ENCODE measurements at regions of chr17 and their contacts with region 1.

Region 1: DNA sequence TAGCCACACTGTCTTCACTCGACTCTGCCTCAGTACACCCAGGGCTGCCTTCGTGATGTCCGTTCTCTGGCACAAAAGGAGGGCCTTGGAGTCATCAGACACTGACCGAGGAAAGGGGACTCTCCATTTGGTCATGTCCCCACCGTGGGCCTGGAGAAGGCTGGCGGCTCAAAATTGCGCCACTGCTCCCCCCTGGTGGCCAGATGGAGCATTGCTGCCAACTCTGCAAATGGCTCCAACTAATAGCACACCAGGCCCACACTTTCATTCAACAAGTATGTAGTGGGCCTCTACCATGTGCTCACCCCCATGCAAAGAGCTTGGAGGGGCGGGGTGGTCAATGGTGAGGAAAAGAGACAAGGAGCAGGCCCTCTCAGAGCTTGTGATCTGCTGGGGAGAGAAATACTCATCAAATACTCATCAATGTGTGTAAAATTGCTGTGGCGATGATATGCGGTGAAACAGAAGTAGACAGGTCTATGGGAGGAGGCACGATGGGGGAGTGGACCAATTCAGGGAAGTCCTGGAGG is 5.2 kb upstream of the GRIN2C start:
- DNase-seq: peak; percentile 44 to 85 (median 68)
- ATAC-seq: peak; percentile 73
- H3K4me3 ChIP-seq: no peak overlapping the region
- H3K4me3 Mint-ChIP-seq: no peak overlapping the region
- H3K27ac ChIP-seq: no peak overlapping the region
- H3K27ac Mint-ChIP-seq: no peak overlapping the region
- H3K4me1 ChIP-seq: peaks cover 28% of the 10 kb centered on the region
- H3K4me1 Mint-ChIP-seq: peaks cover 19% of the 10 kb centered on the region
- H3K27me3 ChIP-seq: peaks cover 19 to 26% of the 10 kb centered on the region in 2 experiments
- H3K27me3 Mint-ChIP-seq: peaks cover 24% of the 10 kb centered on the region
- CTCF ChIP-seq: peak; percentile 89

Region 2: GRCh38 chr17:74659898-74660297 is 205.0 kb before region 1 on chr17:
- CTCF ChIA-PET with region 1: interaction called, 10 read pairs
- POLR2A ChIA-PET with region 1: interaction called, 5 read pairs
- intact Hi-C with region 1: loop called (anchors 1 kb)
- DNase-seq: no peak
- ATAC-seq: no peak
- H3K4me3 ChIP-seq: no peak overlapping the region
- H3K4me3 Mint-ChIP-seq: no peak overlapping the region
- H3K27ac ChIP-seq: no peak overlapping the region
- H3K27ac Mint-ChIP-seq: no peak overlapping the region
- H3K4me1 ChIP-seq: peaks cover 6% of the 10 kb centered on the region
- H3K4me1 Mint-ChIP-seq: peaks cover 5% of the 10 kb centered on the region
- H3K27me3 ChIP-seq: peaks cover 5 to 12% of the 10 kb centered on the region in 2 experiments
- H3K27me3 Mint-ChIP-seq: peaks cover 52% of the 10 kb centered on the region
- CTCF ChIP-seq: no peak

Region 3: GRCh38 chr17:74748529-74749365 is 116.2 kb before region 1 on chr17 and contains the start of gene NHERF1:
- CTCF ChIA-PET with region 1: no interaction called
- POLR2A ChIA-PET with region 1: interaction called, 3 read pairs
- intact Hi-C with region 1: loop called (anchors 1 to 5 kb)
- DNase-seq: peak in 13 of 14 experiments; percentile 83 to 97 (median 94)
- ATAC-seq: peak; percentile 82
- H3K4me3 ChIP-seq: peak within 1 kb of the TSS; percentile 98
- H3K4me3 Mint-ChIP-seq: peak within 1 kb of the TSS; percentile 92
- H3K27ac ChIP-seq: peak within 1 kb of the TSS; percentile 48 to 84
- H3K27ac Mint-ChIP-seq: peak within 1 kb of the TSS; percentile 94
- H3K4me1 ChIP-seq: peaks cover 74% of the 10 kb centered on the region
- H3K4me1 Mint-ChIP-seq: peaks cover 74% of the 10 kb centered on the region
- H3K27me3 ChIP-seq: no peaks in the 10 kb centered on the region
- H3K27me3 Mint-ChIP-seq: no peaks in the 10 kb centered on the region
- CTCF ChIP-seq: no peak
- total RNA-seq, gene NHERF1: 68.4 to 72.4 TPM

Region 4: GRCh38 chr17:74790161-74791054 is 74.5 kb before region 1 on chr17:
- CTCF ChIA-PET with region 1: interaction called, 16 read pairs
- POLR2A ChIA-PET with region 1: interaction called, 5 read pairs
- intact Hi-C with region 1: loop called (anchors 1 kb)
- DNase-seq: peak in 2 of 14 experiments; percentile 37 to 39
- ATAC-seq: no peak
- H3K4me3 ChIP-seq: no peak overlapping the region
- H3K4me3 Mint-ChIP-seq: no peak overlapping the region
- H3K27ac ChIP-seq: peak overlapping the region in 1 of 2 donors; percentile 30
- H3K27ac Mint-ChIP-seq: peak overlapping the region; percentile 74
- H3K4me1 ChIP-seq: peaks cover 41% of the 10 kb centered on the region
- H3K4me1 Mint-ChIP-seq: peaks cover 38% of the 10 kb centered on the region
- H3K27me3 ChIP-seq: no peaks in the 10 kb centered on the region
- H3K27me3 Mint-ChIP-seq: no peaks in the 10 kb centered on the region
- CTCF ChIP-seq: no peak

Region 5: DNA sequence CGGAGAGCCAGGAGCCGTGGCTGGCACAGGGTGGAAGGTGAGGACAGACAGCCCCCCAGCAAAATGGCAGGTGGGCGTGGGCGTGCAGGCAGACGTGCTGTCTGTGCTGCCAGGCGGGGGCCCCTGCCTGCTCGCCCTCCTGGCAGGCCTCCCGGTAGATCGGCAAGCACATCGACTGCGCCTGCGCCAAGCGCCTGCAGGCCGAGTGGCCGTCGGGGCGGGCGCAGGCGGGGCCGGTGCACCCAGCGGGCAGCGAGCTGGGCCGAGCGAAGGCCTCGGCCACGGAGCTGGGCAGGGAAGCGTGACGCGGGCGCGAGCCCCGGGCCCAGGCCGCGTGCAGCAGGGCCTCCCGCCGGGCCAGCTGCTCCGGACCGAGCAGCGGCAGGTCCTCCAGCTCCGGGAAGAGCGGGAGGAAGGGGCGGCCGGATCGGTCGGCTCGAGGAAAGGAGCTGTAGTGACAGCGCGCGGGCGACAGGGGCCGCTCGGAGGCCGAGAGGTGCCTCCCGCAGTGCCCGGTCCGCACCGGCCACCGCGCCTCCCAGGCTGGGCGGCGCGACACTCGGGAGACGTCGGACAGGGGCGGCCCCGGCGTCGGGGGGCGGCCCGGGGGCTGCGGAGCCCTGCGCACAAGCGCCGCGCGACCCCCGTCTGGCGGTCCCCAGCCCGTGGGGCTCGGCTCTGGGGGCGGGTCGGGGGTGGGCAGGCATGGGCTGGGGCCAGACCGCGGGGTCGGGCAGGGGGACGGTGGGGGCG is 22.2 kb before region 1 on chr17:
- CTCF ChIA-PET with region 1: interaction called, 18 read pairs
- POLR2A ChIA-PET with region 1: no interaction called
- intact Hi-C with region 1: no loop called
- DNase-seq: peak in 3 of 14 experiments; percentile 31 to 51 (median 51)
- ATAC-seq: peak; percentile 41
- H3K4me3 ChIP-seq: no peak overlapping the region
- H3K4me3 Mint-ChIP-seq: no peak overlapping the region
- H3K27ac ChIP-seq: no peak overlapping the region
- H3K27ac Mint-ChIP-seq: no peak overlapping the region
- H3K4me1 ChIP-seq: peaks cover 22% of the 10 kb centered on the region
- H3K4me1 Mint-ChIP-seq: peaks cover 10% of the 10 kb centered on the region
- H3K27me3 ChIP-seq: peaks cover 3 to 4% of the 10 kb centered on the region in 2 experiments
- H3K27me3 Mint-ChIP-seq: peaks cover 22% of the 10 kb centered on the region
- CTCF ChIP-seq: no peak

Region 6: DNA sequence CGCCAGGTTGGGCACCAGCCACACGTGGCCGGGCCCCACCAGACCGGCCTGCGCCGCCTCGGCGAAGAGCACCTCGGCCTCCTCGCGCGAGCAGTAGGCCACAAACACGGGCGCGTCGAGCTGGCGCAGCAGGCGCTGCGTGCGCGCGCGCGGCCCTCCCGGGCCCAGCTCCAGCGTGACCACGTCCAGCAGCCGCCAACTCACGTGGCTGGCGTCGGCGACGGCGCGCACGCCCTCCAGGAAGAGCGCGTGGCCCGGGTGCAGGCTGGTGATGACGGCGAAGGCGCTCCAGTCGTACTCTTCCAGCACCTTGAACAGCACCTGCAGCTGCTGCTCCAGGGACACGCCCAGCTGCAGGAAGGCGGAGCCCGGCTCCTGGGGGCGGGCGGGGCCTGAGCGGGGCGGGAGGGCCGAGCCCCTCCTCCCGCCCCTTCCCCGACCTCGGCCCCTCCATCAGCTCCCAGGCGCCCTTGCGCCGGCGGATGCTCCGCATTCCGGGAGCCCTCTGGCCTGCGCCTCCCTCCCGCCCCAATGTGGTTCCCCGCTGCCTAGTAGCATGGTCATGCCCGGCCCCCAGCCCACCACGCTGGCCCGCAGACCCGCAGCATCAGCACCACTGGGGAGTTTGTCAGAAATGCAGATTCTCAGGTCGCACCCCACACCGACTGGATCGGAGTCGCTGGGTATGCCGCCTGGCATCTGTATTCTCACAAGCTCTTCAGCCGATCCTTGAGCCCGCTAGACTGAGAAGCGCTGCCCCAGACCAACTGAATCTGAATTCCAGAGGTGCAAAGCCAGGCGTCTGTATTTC is 12.5 kb before region 1 on chr17:
- CTCF ChIA-PET with region 1: interaction called, 13 read pairs
- POLR2A ChIA-PET with region 1: interaction called, 9 read pairs
- intact Hi-C with region 1: no loop called
- DNase-seq: peak; percentile 48 to 87 (median 64)
- ATAC-seq: peak; percentile 95
- H3K4me3 ChIP-seq: peak overlapping the region; percentile 55
- H3K4me3 Mint-ChIP-seq: peak overlapping the region; percentile 82
- H3K27ac ChIP-seq: no peak overlapping the region
- H3K27ac Mint-ChIP-seq: no peak overlapping the region
- H3K4me1 ChIP-seq: peaks cover 8% of the 10 kb centered on the region
- H3K4me1 Mint-ChIP-seq: peaks cover 5% of the 10 kb centered on the region
- H3K27me3 ChIP-seq: peaks cover 30 to 54% of the 10 kb centered on the region in 2 experiments
- H3K27me3 Mint-ChIP-seq: peaks cover 50% of the 10 kb centered on the region
- CTCF ChIP-seq: no peak

Region 7: DNA sequence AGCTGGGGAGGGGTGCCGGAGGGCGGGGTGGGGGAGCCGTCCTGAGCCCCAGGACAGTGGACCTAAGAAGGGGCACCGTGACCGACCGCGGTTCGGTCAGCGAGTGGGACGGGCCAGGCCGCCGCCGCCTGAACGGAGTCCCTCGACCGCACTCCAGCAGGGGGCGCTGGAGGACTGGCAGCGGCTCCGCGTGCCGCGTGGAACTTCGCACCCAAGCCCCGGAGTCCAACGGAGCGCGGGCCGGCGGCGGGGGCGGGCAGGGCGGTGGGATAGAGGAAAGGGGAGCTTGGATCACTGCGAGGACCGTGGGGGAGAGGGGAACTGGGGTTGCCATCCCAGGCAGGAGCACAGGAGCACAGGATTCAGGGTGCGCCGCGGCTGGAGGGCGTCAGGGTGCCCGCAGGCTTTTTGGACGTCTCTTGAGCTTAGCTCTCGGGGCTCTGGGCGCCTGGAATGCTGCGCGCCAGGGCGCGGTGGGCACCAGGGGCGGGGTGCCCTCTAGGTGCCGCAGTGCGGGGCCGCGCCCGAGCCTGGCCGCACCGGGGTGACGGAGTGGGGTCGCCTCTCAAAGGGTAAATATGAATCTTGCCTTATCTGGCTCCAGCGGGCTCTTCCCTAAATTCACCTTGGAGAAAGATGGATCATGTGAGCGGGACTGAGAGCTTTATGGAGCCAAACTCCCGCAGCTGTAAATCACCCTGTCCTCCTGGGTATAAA is 58.8 kb after region 1 on chr17:
- CTCF ChIA-PET with region 1: no interaction called
- POLR2A ChIA-PET with region 1: no interaction called
- intact Hi-C with region 1: no loop called
- DNase-seq: peak; percentile 55 to 84 (median 66)
- ATAC-seq: peak; percentile 79
- H3K4me3 ChIP-seq: peak overlapping the region; percentile 37
- H3K4me3 Mint-ChIP-seq: peak overlapping the region; percentile 25
- H3K27ac ChIP-seq: no peak overlapping the region
- H3K27ac Mint-ChIP-seq: no peak overlapping the region
- H3K4me1 ChIP-seq: peaks cover 25% of the 10 kb centered on the region
- H3K4me1 Mint-ChIP-seq: peaks cover 15% of the 10 kb centered on the region
- H3K27me3 ChIP-seq: peaks cover 48 to 57% of the 10 kb centered on the region in 2 experiments
- H3K27me3 Mint-ChIP-seq: peaks cover 78% of the 10 kb centered on the region
- CTCF ChIP-seq: peak; percentile 89

Measured in CD4-positive, alpha-beta T cell (primary cell).